Psoas muscle (tissue), 8 donors: ENCODE measurements at regions of chr17 and their contacts with region 1.

Region 1: DNA sequence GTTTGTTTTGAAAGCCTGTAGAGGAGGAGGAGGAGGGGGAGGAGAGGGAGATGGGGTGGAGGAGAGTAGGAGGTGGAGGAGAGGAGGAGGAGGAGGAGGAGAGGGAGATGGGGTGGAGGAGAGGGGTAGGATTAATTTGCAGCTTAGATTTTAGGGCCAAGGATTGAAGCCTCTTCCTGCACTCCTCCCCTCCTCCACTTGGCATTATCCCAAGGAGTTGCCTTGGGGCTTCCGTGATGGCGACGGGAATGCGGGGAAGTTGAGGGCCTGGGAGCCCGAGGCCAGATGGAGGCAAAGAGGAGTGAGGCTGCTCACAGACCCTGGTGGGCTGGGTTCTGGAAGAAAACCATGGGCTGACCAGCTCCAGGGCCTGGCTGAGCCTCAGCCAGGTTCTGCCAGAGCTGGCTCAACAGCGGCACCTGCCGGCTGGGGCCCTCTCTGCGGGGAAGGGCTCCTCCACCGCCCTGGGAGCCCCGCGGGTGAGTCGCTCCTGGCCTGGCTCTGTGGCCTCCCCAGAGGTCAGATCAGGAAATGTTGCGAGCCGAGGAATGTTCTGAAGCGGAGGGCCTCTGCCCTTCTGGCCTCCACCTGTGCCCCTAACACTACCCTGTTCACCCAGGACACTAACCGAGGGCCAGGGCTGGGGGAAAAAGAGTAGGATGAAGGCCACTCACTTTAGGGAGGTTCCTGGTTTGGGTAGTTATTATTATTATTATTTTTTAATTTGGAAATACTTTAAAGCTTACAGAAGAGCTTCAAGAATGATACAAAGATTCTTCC is 23.9 kb upstream of the FMNL1 start:
- DNase-seq: peak; percentile 95 to 97
- ATAC-seq: peak; percentile 98 to 100 (median 98)
- H3K4me3 ChIP-seq: no peak overlapping the region
- H3K27ac ChIP-seq: peak overlapping the region; percentile 56
- H3K4me1 ChIP-seq: peaks cover 4% of the 10 kb centered on the region
- H3K27me3 ChIP-seq: no peaks in the 10 kb centered on the region
- CTCF ChIP-seq: peak; percentile 98

Region 2: GRCh38 chr17:44919885-44920564 is 277.7 kb before region 1 on chr17:
- intact Hi-C with region 1: loop called (anchors 10 kb)
- DNase-seq: peak; percentile 79 to 86
- ATAC-seq: peak; percentile 92 to 98 (median 96)
- H3K4me3 ChIP-seq: no peak overlapping the region
- H3K27ac ChIP-seq: no peak overlapping the region
- H3K4me1 ChIP-seq: no peaks in the 10 kb centered on the region
- H3K27me3 ChIP-seq: peaks cover 0 to 3% (median 0%) of the 10 kb centered on the region in 3 donors
- CTCF ChIP-seq: peak; percentile 83

Region 3: DNA sequence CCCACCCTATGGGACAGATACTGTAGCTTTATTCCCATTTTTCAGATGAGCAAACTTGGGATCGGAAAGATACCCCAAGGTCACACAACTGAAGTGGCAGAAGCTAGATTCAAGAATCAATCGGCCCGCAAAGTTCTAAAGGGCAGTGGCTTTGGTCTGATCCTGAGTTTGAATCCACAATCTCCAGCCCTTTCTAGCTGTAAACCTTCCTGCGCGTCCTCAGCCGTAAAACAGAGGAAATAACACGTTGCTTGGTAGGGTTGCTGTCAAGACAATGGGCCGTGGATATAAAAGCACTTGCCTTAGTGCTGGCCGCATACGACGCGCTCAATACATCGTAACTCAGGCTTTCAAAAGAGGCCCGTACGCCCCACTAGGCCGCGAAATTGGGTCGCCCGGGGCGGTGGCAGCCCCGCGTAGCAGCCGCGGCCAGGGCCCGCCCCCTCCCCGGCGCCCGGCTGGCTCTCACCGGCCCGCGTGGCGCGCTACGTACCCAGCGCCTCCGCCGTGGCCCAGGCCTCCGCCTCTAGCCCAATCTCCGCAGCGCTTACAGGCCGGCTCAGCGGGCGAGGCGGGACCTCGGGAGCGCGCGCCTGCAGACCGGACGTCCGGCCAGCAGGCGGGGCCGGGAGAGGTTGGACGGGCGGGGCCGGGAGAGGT is 146.6 kb before region 1 on chr17 and contains the start of gene DCAKD:
- intact Hi-C with region 1: loop called in 1 of 2 experiments (anchors 10 kb)
- DNase-seq: peak; percentile 96 to 97
- ATAC-seq: peak; percentile 98 to 99 (median 99)
- H3K4me3 ChIP-seq: peak within 1 kb of the TSS; percentile 90
- H3K27ac ChIP-seq: peak within 1 kb of the TSS; percentile 97
- H3K4me1 ChIP-seq: peaks cover 23% of the 10 kb centered on the region
- H3K27me3 ChIP-seq: no peaks in the 10 kb centered on the region
- CTCF ChIP-seq: no peak
- total RNA-seq, gene DCAKD: 6.9 to 13.5 (median 11.0) TPM

Region 4: GRCh38 chr17:45148183-45149036 is 49.3 kb before region 1 on chr17 and contains the start of gene HEXIM1:
- intact Hi-C with region 1: loop called (anchors 5 kb)
- DNase-seq: peak; percentile 99 to 100
- ATAC-seq: peak; percentile 77 to 84 (median 80)
- H3K4me3 ChIP-seq: peak within 1 kb of the TSS; percentile 76
- H3K27ac ChIP-seq: peak within 1 kb of the TSS; percentile 97
- H3K4me1 ChIP-seq: peaks cover 28% of the 10 kb centered on the region
- H3K27me3 ChIP-seq: no peaks in the 10 kb centered on the region
- CTCF ChIP-seq: no peak
- total RNA-seq, gene HEXIM1: 21.3 to 52.2 (median 31.5) TPM

Region 5: DNA sequence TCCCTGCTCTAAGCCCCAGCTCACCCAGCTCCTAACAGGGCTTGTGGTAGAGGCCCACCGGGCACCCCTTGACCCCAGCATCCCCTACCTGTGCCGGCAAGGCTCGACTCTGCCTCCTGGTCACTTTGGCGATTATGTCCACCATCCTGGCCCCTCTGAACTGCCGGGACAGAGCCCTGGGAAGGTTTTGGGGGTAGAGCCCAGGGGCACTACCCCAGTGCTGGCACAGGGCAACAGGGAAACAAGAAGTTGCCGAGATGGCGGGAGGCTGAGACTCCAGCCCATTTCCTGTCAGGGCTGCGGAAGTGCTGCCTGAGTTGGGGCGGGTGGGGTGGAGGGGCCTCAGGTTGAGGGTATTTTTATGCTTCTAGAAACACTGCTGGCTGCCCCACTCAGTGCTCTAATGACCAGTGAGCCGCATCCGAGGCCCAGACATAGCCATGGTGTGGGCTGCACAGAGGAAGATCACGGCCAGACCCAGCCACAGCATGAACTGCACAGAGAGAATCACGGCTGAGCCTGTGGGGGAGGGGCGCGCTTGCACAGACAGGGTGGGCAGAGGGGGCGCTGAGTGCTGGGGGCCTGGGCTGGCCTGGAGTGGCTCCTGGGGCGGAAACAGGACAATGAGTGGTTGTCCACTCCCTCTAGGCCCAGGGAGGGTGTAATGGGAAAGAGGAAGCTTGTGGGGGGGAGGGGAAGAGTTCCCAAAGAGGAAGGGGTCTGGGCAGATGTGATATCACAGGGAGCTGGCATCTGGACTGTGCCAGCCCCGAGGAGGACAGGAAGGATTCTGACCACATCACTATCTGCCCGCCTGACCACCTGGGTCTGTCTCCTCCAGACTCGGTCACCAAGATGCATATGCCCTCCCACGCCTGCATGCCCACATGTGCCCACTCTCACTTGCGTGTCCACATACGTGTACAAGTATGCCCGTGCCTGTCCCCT is 212.7 kb after region 1 on chr17:
- intact Hi-C with region 1: no loop called
- DNase-seq: peak in 1 of 2 donors; percentile 61
- ATAC-seq: peak in 1 of 4 donors; percentile 25
- H3K4me3 ChIP-seq: peak overlapping the region; percentile 48
- H3K27ac ChIP-seq: peak overlapping the region; percentile 36
- H3K4me1 ChIP-seq: peaks cover 13% of the 10 kb centered on the region
- H3K27me3 ChIP-seq: peaks cover 0 to 8% (median 1%) of the 10 kb centered on the region in 3 donors
- CTCF ChIP-seq: no peak